GM13977 (cell line): ENCODE measurements at regions of chr7 and their contacts with region 1.

Region 1: DNA sequence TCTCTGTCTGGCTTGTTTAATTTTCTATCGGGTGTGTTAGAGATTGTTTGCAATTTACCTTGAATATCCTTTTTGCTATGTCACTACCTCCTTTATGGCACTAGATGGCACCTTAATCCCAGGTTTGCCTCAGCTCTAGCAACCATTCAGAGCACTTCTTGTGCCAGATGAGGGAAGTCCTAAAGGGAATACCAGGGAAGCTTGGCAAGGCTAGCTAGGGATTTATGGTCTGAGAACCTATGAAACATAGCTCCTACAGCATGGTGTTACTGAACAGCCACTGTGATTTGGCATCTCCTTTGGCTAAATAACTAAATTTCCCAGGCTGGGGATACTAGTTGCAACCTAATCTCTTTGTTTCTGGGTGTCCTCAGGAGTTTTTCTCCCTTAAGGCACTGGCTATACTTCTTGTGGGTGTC is 69.0 kb upstream of the VOPP1 start:
- DNase-seq: peak; percentile 52
- CTCF ChIP-seq: peak; percentile 87

Region 2: GRCh38 chr7:55214707-55215106 is 426.6 kb before region 1 on chr7:
- in situ Hi-C with region 1: no loop called
- DNase-seq: no peak
- CTCF ChIP-seq: no peak

Region 3: GRCh38 chr7:55951637-55952351 is 310.5 kb after region 1 on chr7 and contains the start of gene MRPS17:
- in situ Hi-C with region 1: loop called (anchors 25 kb)
- DNase-seq: peak; percentile 97
- CTCF ChIP-seq: no peak

Region 4: DNA sequence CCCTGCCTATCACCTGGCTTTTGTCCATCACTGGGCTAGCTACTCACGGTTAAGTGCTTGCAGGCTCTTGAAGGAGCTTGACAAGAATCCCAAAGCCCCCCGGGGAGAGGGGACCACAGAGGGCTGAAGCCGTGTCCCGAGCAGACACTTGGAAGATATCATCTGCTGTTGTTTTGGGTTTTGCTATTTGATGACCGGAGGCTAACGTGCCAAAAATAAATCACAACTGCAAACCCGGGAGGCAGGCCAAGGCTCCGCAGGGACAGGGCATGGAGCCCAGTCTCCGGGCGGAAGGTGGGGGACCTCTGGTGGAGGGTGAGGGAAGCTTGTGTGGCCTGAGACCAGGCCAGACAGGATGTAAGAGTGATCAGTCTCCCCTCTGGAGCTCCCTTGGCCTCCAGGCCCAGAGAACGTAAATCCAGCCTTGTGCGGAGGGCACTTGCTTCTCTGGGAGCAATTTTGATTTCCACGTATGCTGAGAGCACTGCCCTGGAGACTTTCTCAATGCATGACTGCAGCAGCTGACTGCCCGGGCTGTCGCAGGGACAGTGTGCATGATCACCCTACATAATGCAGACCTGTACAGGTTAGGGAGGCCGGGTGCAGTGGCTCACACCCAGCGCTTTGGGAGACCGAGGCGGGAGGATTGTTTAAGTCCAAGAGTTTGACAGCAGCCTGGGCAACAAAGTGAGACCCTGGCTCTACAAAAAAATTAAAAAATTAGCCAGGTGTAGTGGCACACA is 451.7 kb after region 1 on chr7 and contains the start of gene PHKG1:
- in situ Hi-C with region 1: loop called (anchors 25 kb)
- DNase-seq: no peak
- CTCF ChIP-seq: peak; percentile 24